HEK293T (cell line): ENCODE measurements at regions of chr2 and their contacts with region 1.

Region 1: DNA sequence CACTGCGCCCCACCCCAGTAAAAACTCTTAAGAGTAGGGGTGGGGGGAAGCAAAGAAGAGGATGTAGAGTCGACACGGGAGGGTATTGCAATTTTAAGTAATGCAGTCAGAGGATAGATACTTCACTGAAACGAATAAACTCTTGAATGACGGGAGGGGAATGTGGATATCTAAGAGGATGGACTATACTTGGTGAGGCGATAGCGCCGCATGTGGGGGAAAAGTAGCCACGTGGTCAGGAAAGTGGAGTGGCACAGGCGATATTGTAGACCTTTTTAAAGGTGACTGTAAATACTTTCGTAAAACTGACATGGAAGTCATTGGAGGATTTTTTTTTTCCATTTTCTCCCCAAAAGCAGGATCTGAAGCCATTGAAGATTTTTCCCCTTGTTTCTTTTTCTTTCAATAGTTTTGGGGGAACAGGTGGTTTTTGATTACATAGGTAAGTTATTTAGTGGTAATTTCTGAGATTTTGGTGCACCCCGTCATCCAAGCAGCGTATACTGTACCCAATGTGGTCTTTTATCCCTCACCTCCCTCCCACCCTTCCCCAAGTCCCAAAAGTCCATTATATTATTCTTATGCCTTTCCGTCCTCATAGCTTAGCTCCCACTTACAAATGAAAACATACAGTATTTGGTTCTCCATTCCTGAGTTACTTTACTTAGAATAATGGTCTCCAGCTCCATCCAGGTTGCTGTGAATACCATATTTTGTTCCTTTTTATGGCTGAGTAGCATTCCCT is 13.8 kb downstream of the CLK1 start:
- DNase-seq: no peak

Region 2: DNA sequence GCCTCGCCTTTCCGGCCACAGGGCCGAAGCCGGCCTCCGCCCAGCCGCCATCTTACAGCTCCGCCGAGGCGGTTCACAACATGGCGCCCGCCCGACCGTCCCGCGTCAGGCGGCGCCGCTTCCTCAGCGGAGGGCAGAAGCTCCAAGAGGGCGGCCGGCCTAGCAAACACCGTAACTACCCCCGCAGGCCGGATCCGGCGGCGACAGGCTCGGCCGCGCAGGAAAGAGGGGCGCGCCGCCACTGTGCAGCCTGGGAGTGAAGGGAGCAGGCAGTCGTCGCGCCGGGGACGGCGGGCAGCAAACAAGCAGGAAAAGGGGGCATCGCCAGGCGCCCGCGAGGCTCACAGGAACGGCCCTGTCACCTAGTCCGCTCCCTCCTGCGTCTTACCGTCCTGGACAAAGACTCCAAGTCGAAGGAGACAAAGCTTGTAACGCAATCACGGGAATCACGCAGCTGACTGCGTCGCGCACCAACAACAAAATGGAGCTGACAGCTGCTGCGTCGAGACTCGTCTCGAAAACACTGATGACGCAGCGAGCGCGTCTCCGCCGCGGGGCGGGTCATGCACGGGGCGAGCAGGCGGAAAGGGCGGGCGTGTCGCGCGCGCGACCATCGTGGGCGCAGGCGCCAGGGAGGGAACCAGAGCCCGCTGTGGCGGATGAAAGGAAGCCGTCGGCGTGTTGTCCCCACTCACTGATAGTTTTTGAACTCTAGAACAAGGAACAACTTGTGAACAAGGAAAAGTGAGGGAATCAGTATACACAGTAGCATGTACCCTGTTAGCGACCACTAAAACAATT is 13.7 kb after region 1 on chr2 and contains the start of gene CLK1:
- CTCF ChIA-PET with region 1: interaction called, 3 read pairs
- POLR2A ChIA-PET with region 1: interaction called, 18 read pairs
- DNase-seq: peak; percentile 85